ENCODE measurements at regions of chr9 and their contacts with region 1.

Region 1: DNA sequence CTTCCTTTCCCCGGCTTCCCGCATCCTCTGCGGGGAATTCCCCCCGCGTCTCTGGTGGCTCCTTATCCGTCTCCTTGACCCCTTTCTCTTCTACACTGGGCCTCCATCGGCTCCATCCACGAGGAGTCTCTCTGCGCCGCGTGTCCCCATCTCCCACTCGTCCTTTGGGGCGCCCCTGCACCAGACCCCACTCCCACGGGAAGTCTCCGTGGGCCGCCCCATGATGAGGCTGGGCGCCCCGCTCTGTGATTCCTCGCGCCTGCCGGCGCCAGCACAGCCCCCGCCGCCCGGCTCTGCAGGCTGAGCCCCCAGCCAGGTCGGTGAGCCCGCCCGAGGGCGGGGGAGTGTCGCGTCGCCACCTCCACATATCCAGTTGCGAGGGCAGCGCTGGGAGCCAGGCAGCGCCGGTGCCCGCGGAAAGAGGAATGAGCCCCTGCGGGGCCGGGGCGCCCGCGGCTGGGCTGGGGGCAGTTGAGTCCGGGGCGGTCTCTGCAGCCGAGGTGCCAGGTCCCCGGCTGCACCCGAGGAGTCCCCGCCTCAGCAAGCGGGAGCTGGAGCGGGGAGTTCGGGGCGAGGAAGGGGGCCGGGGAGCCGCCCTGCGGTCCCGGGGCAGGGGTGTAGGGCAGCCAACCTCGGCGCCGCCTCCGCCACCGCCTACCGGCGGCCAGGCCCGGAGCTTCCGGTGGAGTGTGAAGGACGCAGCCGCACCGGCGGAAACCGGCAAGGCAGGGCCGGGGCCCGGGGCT is 2.1 kb upstream of the TRAF1 start:
- DNase-seq: peak; percentile 58 to 90 (median 78)
- ATAC-seq: peak; percentile 39
- H3K4me3 ChIP-seq: peak overlapping the region; percentile 90
- H3K4me3 Mint-ChIP-seq: peak overlapping the region; percentile 88
- H3K27ac ChIP-seq: peak overlapping the region; percentile 98 to 100
- H3K27ac Mint-ChIP-seq: peak overlapping the region; percentile 100
- H3K4me1 ChIP-seq: peaks cover 90% of the 10 kb centered on the region
- H3K4me1 Mint-ChIP-seq: peaks cover 91% of the 10 kb centered on the region
- H3K27me3 ChIP-seq: no peaks in the 10 kb centered on the region
- H3K27me3 Mint-ChIP-seq: no peaks in the 10 kb centered on the region
- CTCF ChIP-seq: no peak

Region 2: GRCh38 chr9:120792898-120793765 is 135.5 kb before region 1 on chr9 and contains the start of gene FBXW2:
- CTCF ChIA-PET with region 1: no interaction called
- POLR2A ChIA-PET with region 1: interaction called, 16 read pairs
- intact Hi-C with region 1: no loop called
- DNase-seq: peak; percentile 58 to 92 (median 78)
- ATAC-seq: peak; percentile 79
- H3K4me3 ChIP-seq: peak within 1 kb of the TSS; percentile 97
- H3K4me3 Mint-ChIP-seq: peak within 1 kb of the TSS; percentile 88
- H3K27ac ChIP-seq: peak within 1 kb of the TSS; percentile 81 to 82
- H3K27ac Mint-ChIP-seq: peak within 1 kb of the TSS; percentile 92
- H3K4me1 ChIP-seq: peaks cover 39% of the 10 kb centered on the region
- H3K4me1 Mint-ChIP-seq: peaks cover 63% of the 10 kb centered on the region
- H3K27me3 ChIP-seq: no peaks in the 10 kb centered on the region
- H3K27me3 Mint-ChIP-seq: no peaks in the 10 kb centered on the region
- CTCF ChIP-seq: no peak
- total RNA-seq, gene FBXW2: 58.7 to 64.7 TPM

Region 3: GRCh38 chr9:120904061-120904977 is 24.3 kb before region 1 on chr9:
- CTCF ChIA-PET with region 1: interaction called, 5 read pairs
- POLR2A ChIA-PET with region 1: interaction called, 1,343 read pairs
- intact Hi-C with region 1: loop called in 1 of 2 experiments (anchors 1 kb)
- DNase-seq: peak; percentile 54 to 94 (median 70)
- ATAC-seq: peak; percentile 91
- H3K4me3 ChIP-seq: no peak overlapping the region
- H3K4me3 Mint-ChIP-seq: peak overlapping the region; percentile 35
- H3K27ac ChIP-seq: peak overlapping the region; percentile 92 to 93
- H3K27ac Mint-ChIP-seq: peak overlapping the region; percentile 99
- H3K4me1 ChIP-seq: peaks cover 80% of the 10 kb centered on the region
- H3K4me1 Mint-ChIP-seq: peaks cover 88% of the 10 kb centered on the region
- H3K27me3 ChIP-seq: no peaks in the 10 kb centered on the region
- H3K27me3 Mint-ChIP-seq: no peaks in the 10 kb centered on the region
- CTCF ChIP-seq: no peak

Region 4: DNA sequence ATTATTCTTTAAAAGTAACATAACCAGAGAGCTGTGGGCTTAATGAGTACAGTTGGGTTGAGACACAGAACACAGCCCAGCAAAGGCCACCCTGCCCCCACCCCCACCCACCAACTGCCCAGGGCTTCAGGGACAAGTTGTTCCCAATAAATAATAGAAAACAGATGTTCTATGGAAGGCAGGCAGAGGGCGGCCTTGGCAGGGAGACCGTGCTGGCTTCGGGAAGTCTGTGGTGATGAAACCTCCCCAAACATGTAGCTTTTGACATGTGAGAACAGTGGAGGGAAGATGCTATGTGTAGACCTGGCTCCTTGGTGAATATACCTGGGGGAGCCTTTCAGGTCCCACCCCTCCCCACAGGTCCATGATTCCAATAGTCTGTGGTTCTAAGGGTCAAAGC is 12.1 kb before region 1 on chr9:
- CTCF ChIA-PET with region 1: interaction called, 6 read pairs
- POLR2A ChIA-PET with region 1: interaction called, 1,343 read pairs
- intact Hi-C with region 1: loop called (anchors 2 kb)
- DNase-seq: no peak
- ATAC-seq: no peak
- H3K4me3 ChIP-seq: no peak overlapping the region
- H3K4me3 Mint-ChIP-seq: no peak overlapping the region
- H3K27ac ChIP-seq: peak overlapping the region; percentile 43
- H3K27ac Mint-ChIP-seq: peak overlapping the region; percentile 90
- H3K4me1 ChIP-seq: peaks cover 96% of the 10 kb centered on the region
- H3K4me1 Mint-ChIP-seq: peaks cover 88% of the 10 kb centered on the region
- H3K27me3 ChIP-seq: no peaks in the 10 kb centered on the region
- H3K27me3 Mint-ChIP-seq: no peaks in the 10 kb centered on the region
- CTCF ChIP-seq: no peak

Region 5: GRCh38 chr9:120985810-120986222 is 57.2 kb after region 1 on chr9:
- CTCF ChIA-PET with region 1: no interaction called
- POLR2A ChIA-PET with region 1: interaction called, 5 read pairs
- intact Hi-C with region 1: loop called in 1 of 2 experiments (anchors 5 kb)
- DNase-seq: peak in 1 of 14 experiments; percentile 4
- ATAC-seq: no peak
- H3K4me3 ChIP-seq: no peak overlapping the region
- H3K4me3 Mint-ChIP-seq: no peak overlapping the region
- H3K27ac ChIP-seq: no peak overlapping the region
- H3K27ac Mint-ChIP-seq: no peak overlapping the region
- H3K4me1 ChIP-seq: no peaks in the 10 kb centered on the region
- H3K4me1 Mint-ChIP-seq: peaks cover 5% of the 10 kb centered on the region
- H3K27me3 ChIP-seq: no peaks in the 10 kb centered on the region
- H3K27me3 Mint-ChIP-seq: no peaks in the 10 kb centered on the region
- CTCF ChIP-seq: no peak